BJ (cell line): ENCODE measurements at regions of chr12 and their contacts with region 1.

Region 1: DNA sequence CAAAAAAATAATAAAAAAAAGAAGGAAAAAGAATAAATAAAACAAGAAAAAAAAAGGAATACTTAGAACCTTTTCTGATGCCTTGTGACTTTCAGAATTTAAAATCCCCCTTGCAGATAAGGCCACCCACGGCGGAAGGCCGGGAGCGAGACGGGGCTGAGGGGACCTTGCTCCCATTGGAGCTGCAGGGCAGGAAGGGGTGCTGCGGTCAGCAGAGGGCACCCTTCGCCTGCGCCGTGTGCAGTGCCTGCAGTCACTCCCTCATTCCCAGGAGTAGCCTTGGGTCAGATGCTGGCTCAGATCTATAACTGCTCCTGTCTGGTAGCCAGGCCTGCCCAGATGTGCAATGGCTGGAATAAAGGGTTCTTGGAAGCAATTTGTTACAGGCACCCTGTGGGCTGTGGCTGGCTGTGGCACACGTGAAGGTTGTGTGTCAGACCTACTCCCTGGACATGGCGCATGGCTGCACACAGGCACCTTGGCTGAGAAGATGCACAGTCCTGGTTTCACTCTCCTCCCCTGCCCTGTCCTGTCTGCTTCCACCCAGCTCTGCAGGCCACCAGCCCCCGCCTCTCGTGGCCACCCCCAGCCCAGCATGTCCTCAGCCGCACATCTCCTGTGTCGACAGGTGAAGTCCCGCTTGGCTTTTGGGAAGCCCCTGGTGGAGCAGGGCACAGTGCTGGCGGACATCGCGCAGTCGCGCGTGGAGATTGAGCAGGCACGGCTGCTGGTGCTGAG is 13.4 kb upstream of the ALDH2 start:
- DNase-seq: no peak
- H3K4me3 ChIP-seq: no peak overlapping the region
- H3K27me3 ChIP-seq: no peaks in the 10 kb centered on the region
- CTCF ChIP-seq: peak; percentile 84

Region 2: GRCh38 chr12:111664961-111665865 is 88.1 kb before region 1 on chr12:
- CTCF ChIA-PET with region 1: no interaction called
- POLR2A ChIA-PET with region 1: no interaction called
- DNase-seq: no peak
- H3K4me3 ChIP-seq: no peak overlapping the region
- H3K27me3 ChIP-seq: no peaks in the 10 kb centered on the region
- CTCF ChIP-seq: no peak

Region 3: GRCh38 chr12:111764120-111764821 is 11.0 kb after region 1 on chr12:
- CTCF ChIA-PET with region 1: interaction called, 29 read pairs
- POLR2A ChIA-PET with region 1: no interaction called
- DNase-seq: no peak
- H3K4me3 ChIP-seq: no peak overlapping the region
- H3K27me3 ChIP-seq: no peaks in the 10 kb centered on the region
- CTCF ChIP-seq: no peak

Region 4: DNA sequence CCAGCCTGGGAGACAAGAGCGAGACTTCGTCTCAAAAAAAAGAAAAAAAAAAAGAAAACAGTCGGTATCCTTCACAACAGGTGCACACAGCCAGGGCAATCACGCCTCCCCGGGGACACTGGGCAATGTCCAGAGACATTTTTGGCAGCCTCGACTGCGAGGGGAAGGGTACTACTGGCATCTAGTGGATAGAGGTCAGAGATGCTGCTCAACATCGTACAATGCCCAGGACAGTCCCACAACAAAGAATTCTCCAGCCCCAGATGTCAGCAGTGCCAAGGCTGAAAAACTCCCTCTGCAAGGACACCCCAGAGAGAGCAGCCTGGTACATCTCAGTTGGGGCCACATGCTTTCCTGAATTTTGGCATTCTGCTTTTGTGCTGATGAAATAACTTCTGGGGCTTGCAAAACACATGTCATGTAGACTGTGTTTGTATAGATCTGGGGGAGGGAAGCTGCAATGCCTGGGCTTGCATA is 34.9 kb after region 1 on chr12:
- CTCF ChIA-PET with region 1: interaction called, 27 read pairs
- POLR2A ChIA-PET with region 1: no interaction called
- DNase-seq: no peak
- H3K4me3 ChIP-seq: no peak overlapping the region
- H3K27me3 ChIP-seq: no peaks in the 10 kb centered on the region
- CTCF ChIP-seq: peak; percentile 39; the same call in 1 of the 2 replicates

Region 5: GRCh38 chr12:111841750-111842555 is 88.6 kb after region 1 on chr12 and contains the start of gene MAPKAPK5:
- CTCF ChIA-PET with region 1: no interaction called
- POLR2A ChIA-PET with region 1: no interaction called
- DNase-seq: peak; percentile 61
- H3K4me3 ChIP-seq: peak within 1 kb of the TSS; percentile 57
- H3K27me3 ChIP-seq: no peaks in the 10 kb centered on the region
- CTCF ChIP-seq: no peak
- polyA plus RNA-seq, gene MAPKAPK5: 32.5 and 32.9 TPM in 2 replicates

Region 6: GRCh38 chr12:111870706-111871105 is 117.4 kb after region 1 on chr12:
- CTCF ChIA-PET with region 1: no interaction called
- POLR2A ChIA-PET with region 1: no interaction called
- DNase-seq: no peak
- H3K4me3 ChIP-seq: no peak overlapping the region
- H3K27me3 ChIP-seq: no peaks in the 10 kb centered on the region
- CTCF ChIP-seq: no peak

Region 7: GRCh38 chr12:112616469-112617152 is 863.3 kb after region 1 on chr12:
- CTCF ChIA-PET with region 1: no interaction called
- POLR2A ChIA-PET with region 1: no interaction called
- DNase-seq: no peak
- H3K4me3 ChIP-seq: no peak overlapping the region
- H3K27me3 ChIP-seq: no peaks in the 10 kb centered on the region
- CTCF ChIP-seq: no peak